ENCODE measurements at regions of chr1 and their contacts with region 1.

Region 1: GRCh38 chr1:171741872-171742576 is at the start of gene VAMP4:
- DNase-seq: peak; percentile 70 to 79 (median 78)
- H3K4me3 ChIP-seq: peak within 1 kb of the TSS; percentile 93 to 99 (median 96)
- H3K4me3 Mint-ChIP-seq: peak within 1 kb of the TSS; percentile 98 to 99
- H3K27ac ChIP-seq: peak within 1 kb of the TSS; percentile 96
- H3K27ac Mint-ChIP-seq: peak within 1 kb of the TSS; percentile 98 to 100 (median 99)
- H3K4me1 ChIP-seq: peaks cover 57 to 69% of the 10 kb centered on the region in 2 donors
- H3K4me1 Mint-ChIP-seq: peaks cover 59% of the 10 kb centered on the region
- H3K27me3 ChIP-seq: no peaks in the 10 kb centered on the region
- H3K27me3 Mint-ChIP-seq: peaks cover 0 to 2% (median 0%) of the 10 kb centered on the region in 3 donors
- CTCF ChIP-seq: no peak
- polyA plus RNA-seq, gene VAMP4: 13.3 to 19.5 (median 18.8) TPM

Region 2: GRCh38 chr1:171781176-171781875 is 39.3 kb after region 1 on chr1 and contains the start of gene METTL13:
- intact Hi-C with region 1: loop called (anchors 1 to 5 kb)
- DNase-seq: peak; percentile 97 to 98 (median 98)
- H3K4me3 ChIP-seq: peak within 1 kb of the TSS; percentile 83 to 98 (median 86)
- H3K4me3 Mint-ChIP-seq: peak within 1 kb of the TSS; percentile 96
- H3K27ac ChIP-seq: peak within 1 kb of the TSS; percentile 84 to 98
- H3K27ac Mint-ChIP-seq: peak within 1 kb of the TSS; percentile 96 to 99 (median 98)
- H3K4me1 ChIP-seq: peaks cover 18 to 26% of the 10 kb centered on the region in 2 donors
- H3K4me1 Mint-ChIP-seq: peaks cover 34% of the 10 kb centered on the region
- H3K27me3 ChIP-seq: no peaks in the 10 kb centered on the region
- H3K27me3 Mint-ChIP-seq: peaks cover 0 to 2% (median 2%) of the 10 kb centered on the region in 3 donors
- CTCF ChIP-seq: no peak
- polyA plus RNA-seq, gene METTL13: 8.8 to 18.5 (median 16.0) TPM